BJ (cell line): ENCODE measurements at regions of chr1 and their contacts with region 1.

Region 1: GRCh38 chr1:60160141-60160540 is 86.6 kb upstream of the C1orf87 start:
- DNase-seq: peak; percentile 35
- H3K4me3 ChIP-seq: no peak overlapping the region
- H3K27me3 ChIP-seq: peaks cover 5% of the 10 kb centered on the region
- CTCF ChIP-seq: no peak

Region 2: DNA sequence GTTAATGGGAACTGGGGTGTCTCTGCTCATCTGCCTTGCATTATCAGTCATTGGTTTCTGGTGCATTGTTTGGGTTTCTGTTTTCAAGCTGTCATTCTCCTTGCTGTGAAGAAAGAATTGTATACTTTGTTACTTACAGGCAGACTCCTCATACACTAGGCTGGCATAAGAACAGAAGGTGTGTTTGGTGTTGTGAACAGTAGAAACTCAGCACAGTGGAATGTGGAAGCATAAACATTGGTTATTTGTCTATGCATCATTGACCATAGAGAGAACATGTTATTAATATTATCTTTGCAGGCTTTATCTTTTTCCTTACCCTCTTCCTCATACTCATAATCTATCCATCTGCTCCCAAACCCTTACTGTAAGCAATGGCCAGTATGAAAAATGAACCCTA is 104.8 kb before region 1 on chr1:
- CTCF ChIA-PET with region 1: no interaction called
- POLR2A ChIA-PET with region 1: no interaction called
- DNase-seq: no peak
- H3K4me3 ChIP-seq: no peak overlapping the region
- H3K27me3 ChIP-seq: peaks cover 3% of the 10 kb centered on the region
- CTCF ChIP-seq: no peak

Region 3: GRCh38 chr1:60171801-60172200 is 11.7 kb after region 1 on chr1:
- CTCF ChIA-PET with region 1: interaction called, 12 read pairs
- POLR2A ChIA-PET with region 1: interaction called, 3 read pairs
- DNase-seq: peak; percentile 66
- H3K4me3 ChIP-seq: no peak overlapping the region
- H3K27me3 ChIP-seq: peaks cover 1% of the 10 kb centered on the region; the same call in 1 of the 2 replicates
- CTCF ChIP-seq: no peak

Region 4: DNA sequence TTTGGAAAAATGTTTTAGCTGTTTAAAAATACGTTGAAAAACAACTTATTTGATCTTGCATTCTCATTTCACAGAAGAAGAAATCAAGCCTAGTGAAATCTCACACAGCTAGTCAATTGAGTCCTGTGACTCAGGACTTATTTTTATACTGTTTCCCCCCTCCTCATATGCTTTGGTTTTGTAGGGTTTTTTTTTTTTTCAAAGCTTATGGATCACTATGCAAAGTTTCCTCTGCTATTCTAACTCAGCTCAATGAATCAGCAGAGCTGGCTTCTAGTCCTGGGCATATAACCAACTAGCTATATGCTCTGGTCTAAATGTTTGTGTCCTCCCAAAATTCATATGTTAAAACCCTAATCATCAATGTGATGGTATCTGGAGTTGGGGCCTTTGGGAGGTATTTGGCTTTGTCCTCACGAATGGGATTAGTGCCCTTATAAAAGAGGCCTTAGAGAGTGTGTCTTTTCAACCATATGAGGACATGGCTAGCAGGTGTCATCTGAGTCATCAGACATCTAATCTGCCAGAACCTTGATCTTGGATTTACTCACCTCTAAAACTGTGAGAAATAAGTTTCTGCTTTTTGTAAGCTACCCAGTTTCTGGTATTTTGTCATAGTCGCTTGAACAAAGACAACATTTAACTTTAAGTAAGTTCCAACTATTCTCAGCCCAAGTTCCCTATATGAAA is 230.6 kb after region 1 on chr1:
- CTCF ChIA-PET with region 1: no interaction called
- POLR2A ChIA-PET with region 1: no interaction called
- DNase-seq: no peak
- H3K4me3 ChIP-seq: no peak overlapping the region
- H3K27me3 ChIP-seq: no peaks in the 10 kb centered on the region
- CTCF ChIP-seq: no peak